H1 (cell line): ENCODE measurements at regions of chr13 and their contacts with region 1.

Region 1: DNA sequence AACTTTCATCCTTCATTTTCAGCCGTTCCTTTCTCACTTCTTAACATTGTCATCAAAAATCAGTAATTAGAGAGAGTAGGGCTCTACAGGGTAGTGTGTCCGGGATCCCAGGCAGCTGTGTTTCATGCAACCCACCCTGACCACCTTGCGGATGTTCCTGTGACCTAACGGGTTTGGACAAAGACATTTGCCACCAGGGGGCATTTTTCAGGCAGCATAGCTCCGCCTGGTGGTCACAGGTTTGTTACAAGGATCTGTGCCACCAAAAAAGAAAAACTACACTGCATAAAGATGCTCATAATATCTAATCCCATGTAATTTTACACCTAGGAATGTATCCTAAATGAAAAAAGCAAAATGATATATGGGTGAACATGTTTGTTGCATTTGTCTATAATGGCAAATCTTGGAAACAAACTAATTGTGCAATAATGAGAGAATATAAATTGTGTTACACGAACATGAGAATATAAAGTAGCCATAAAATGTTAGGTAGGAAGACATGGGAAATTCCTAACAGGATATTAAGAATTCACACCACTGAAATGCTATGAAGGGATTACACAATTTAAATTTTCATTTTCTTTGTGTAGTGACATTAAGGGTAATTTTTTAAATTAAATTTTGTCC is 123.0 kb downstream of the SLC7A1 start:
- DNase-seq: peak in 1 of 2 experiments; percentile 78
- H3K4me3 ChIP-seq: no peak overlapping the region
- H3K27ac ChIP-seq: no peak overlapping the region
- H3K4me1 ChIP-seq: no peaks in the 10 kb centered on the region
- H3K27me3 ChIP-seq: no peaks in the 10 kb centered on the region
- CTCF ChIP-seq: peak; percentile 78 to 99 (median 92)
- EP300 ChIP-seq: no peak
- POLR2A ChIP-seq: no peak
- RAD21 ChIP-seq: peak; percentile 70 to 75

Region 2: GRCh38 chr13:29454911-29455481 is 17.5 kb before region 1 on chr13:
- CTCF ChIA-PET with region 1: interaction called, 19 read pairs
- POLR2A ChIA-PET with region 1: no interaction called
- DNase-seq: peak in 1 of 2 experiments; percentile 55
- H3K4me3 ChIP-seq: no peak overlapping the region
- H3K27ac ChIP-seq: no peak overlapping the region
- H3K4me1 ChIP-seq: peaks cover 0 to 4% (median 0%) of the 10 kb centered on the region in 4 experiments; a peak in 2 of 7 replicates
- H3K27me3 ChIP-seq: no peaks in the 10 kb centered on the region
- CTCF ChIP-seq: peak; percentile 47 to 71 (median 58)
- EP300 ChIP-seq: no peak
- POLR2A ChIP-seq: no peak
- RAD21 ChIP-seq: peak; percentile 37 to 46; a peak in 3 of 4 replicates

Region 3: DNA sequence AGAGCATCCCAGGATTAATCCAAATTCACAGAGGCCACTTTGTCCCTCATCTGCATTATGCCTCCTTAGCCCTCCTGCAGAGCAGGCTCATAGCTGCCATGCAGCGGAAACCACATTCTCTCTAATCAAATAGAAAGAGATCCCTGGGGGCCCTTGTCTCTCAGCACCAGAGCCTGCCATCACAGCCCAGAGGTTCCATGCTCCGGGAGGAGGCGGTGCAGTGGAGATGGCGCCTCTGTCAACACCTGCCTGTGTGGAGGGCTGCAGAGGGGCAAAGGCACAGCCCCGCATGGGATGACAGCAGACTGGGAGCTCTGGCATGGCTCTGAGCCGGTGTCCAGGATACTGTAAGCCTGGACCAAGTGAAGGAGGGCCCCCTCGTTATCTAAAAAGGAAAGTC is 11.8 kb after region 1 on chr13:
- CTCF ChIA-PET with region 1: interaction called, 25 read pairs
- POLR2A ChIA-PET with region 1: no interaction called
- DNase-seq: no peak
- H3K4me3 ChIP-seq: no peak overlapping the region
- H3K27ac ChIP-seq: no peak overlapping the region
- H3K4me1 ChIP-seq: peaks cover 2 to 11% (median 6%) of the 10 kb centered on the region in 4 experiments
- H3K27me3 ChIP-seq: no peaks in the 10 kb centered on the region
- CTCF ChIP-seq: no peak
- EP300 ChIP-seq: no peak
- POLR2A ChIP-seq: no peak
- RAD21 ChIP-seq: no peak

Region 4: GRCh38 chr13:29496240-29496712 is 23.8 kb after region 1 on chr13:
- CTCF ChIA-PET with region 1: interaction called, 10 read pairs
- POLR2A ChIA-PET with region 1: no interaction called
- DNase-seq: no peak
- H3K4me3 ChIP-seq: no peak overlapping the region
- H3K27ac ChIP-seq: no peak overlapping the region
- H3K4me1 ChIP-seq: peaks cover 0 to 3% (median 0%) of the 10 kb centered on the region in 4 experiments; a peak in 2 of 7 replicates
- H3K27me3 ChIP-seq: peaks cover 0 to 2% (median 0%) of the 10 kb centered on the region in 4 experiments; a peak in 1 of 7 replicates
- CTCF ChIP-seq: no peak
- EP300 ChIP-seq: no peak
- POLR2A ChIP-seq: no peak
- RAD21 ChIP-seq: no peak

Region 5: GRCh38 chr13:29707876-29708543 is 235.6 kb after region 1 on chr13:
- CTCF ChIA-PET with region 1: interaction called, 10 read pairs
- POLR2A ChIA-PET with region 1: no interaction called
- DNase-seq: peak; percentile 59 to 79
- H3K4me3 ChIP-seq: no peak overlapping the region
- H3K27ac ChIP-seq: no peak overlapping the region
- H3K4me1 ChIP-seq: peaks cover 0 to 4% (median 3%) of the 10 kb centered on the region in 4 experiments; a peak in 6 of 7 replicates
- H3K27me3 ChIP-seq: no peaks in the 10 kb centered on the region
- CTCF ChIP-seq: peak; percentile 85 to 94 (median 92)
- EP300 ChIP-seq: no peak
- POLR2A ChIP-seq: no peak
- RAD21 ChIP-seq: peak; percentile 98 to 100